HepG2 (cell line): ENCODE measurements at regions of chrX and their contacts with region 1.

Region 1: DNA sequence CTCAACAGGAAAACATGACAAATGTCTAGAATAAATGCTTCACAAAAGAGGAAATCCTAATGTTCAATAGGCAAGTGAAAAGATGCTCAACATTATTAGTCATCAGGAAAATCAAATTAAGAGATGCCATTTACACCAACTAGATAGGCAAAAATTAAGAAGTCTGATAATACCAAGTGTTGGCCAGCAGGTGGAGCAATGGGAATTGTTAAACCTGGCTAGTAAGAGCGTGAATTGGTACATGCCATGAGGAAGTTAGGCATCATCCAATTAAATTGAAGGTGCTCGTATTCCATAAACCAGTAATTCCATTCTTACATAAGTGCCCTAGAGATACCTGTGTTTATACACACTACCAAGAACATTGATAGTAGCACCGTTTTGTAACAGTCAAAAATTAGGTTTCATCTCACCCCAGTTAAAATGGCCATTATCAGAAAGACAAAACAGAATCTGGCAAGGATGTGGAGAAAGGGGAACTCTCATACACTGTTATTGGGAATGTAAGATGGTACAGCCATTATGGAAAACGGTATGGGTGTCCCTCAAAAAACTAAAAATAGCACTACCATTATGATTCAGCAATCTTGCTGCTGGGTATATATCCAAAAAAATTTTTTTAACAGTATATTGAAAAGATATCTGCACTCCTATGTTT is 14.0 kb upstream of the ZCCHC18 start:
- DNase-seq: peak; percentile 22
- ATAC-seq: 0 out of 3 replicates have a peak, but pooled peaks have one; percentile 31
- H3K4me3 ChIP-seq: no peak overlapping the region
- H3K27ac ChIP-seq: no peak overlapping the region
- H3K4me1 ChIP-seq: no peaks in the 10 kb centered on the region
- H3K27me3 ChIP-seq: no peaks in the 10 kb centered on the region
- CTCF ChIP-seq: peak; percentile 59
- EP300 ChIP-seq: no peak
- POLR2A ChIP-seq: no peak
- RAD21 ChIP-seq: no peak

Region 2: GRCh38 chrX:103999234-103999633 is 99.0 kb before region 1 on chrX:
- CTCF ChIA-PET with region 1: no interaction called
- POLR2A ChIA-PET with region 1: no interaction called
- in situ Hi-C with region 1: no loop called
- intact Hi-C with region 1: no loop called
- DNase-seq: no peak
- ATAC-seq: no peak
- H3K4me3 ChIP-seq: no peak overlapping the region
- H3K27ac ChIP-seq: no peak overlapping the region
- H3K4me1 ChIP-seq: no peaks in the 10 kb centered on the region
- H3K27me3 ChIP-seq: no peaks in the 10 kb centered on the region
- CTCF ChIP-seq: no peak
- EP300 ChIP-seq: no peak
- POLR2A ChIP-seq: no peak
- RAD21 ChIP-seq: no peak

Region 3: GRCh38 chrX:104084534-104085277 is 13.6 kb before region 1 on chrX:
- CTCF ChIA-PET with region 1: no interaction called
- POLR2A ChIA-PET with region 1: no interaction called
- in situ Hi-C with region 1: no loop called
- intact Hi-C with region 1: no loop called
- DNase-seq: no peak
- ATAC-seq: no peak
- H3K4me3 ChIP-seq: no peak overlapping the region
- H3K27ac ChIP-seq: no peak overlapping the region
- H3K4me1 ChIP-seq: no peaks in the 10 kb centered on the region
- H3K27me3 ChIP-seq: no peaks in the 10 kb centered on the region
- CTCF ChIP-seq: no peak
- EP300 ChIP-seq: no peak
- POLR2A ChIP-seq: no peak
- RAD21 ChIP-seq: no peak

Region 4: DNA sequence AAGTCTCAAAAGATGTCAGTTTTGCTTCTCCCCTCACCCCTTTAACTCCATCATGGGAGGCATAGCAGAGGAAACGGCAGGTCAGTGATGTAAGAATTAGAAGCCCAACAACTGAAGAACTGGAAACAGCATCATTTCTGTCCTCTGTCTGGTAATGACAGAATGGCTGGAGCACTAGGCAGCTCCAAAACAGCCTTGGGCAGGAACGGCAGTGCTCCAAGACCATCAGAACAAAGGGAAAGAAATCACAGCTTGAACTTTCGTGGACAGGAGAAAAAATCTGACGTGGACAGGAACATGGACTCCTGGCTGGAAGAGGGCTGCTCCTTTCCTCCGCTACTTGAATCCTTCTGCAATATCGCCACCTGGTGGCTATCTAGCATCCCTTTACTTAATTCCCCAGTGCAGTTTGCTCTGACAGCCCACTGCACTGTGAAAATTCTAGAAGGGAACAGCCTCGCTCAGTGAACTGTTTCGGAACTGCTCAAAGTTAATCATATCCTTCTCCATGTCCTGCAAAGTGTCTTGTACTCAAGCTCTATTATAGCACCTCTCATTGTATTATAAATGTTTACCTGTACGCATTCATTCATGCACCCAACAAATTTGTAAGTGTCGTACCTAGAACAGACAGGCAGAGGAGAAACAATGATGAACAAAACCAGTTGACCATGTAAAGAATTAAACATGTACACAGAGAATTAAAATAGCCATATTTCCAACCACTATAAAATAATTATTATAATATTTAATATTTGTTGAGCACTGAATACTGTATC is 38.1 kb after region 1 on chrX:
- CTCF ChIA-PET with region 1: interaction called, 4 read pairs
- POLR2A ChIA-PET with region 1: no interaction called
- in situ Hi-C with region 1: no loop called
- intact Hi-C with region 1: loop called (anchors 1 kb)
- DNase-seq: peak; percentile 70
- ATAC-seq: peak; percentile 93
- H3K4me3 ChIP-seq: peak overlapping the region; percentile 26 to 57 (median 41); a peak in 5 of 6 replicates
- H3K27ac ChIP-seq: no peak overlapping the region
- H3K4me1 ChIP-seq: no peaks in the 10 kb centered on the region
- H3K27me3 ChIP-seq: no peaks in the 10 kb centered on the region
- CTCF ChIP-seq: peak; percentile 74
- EP300 ChIP-seq: no peak
- POLR2A ChIP-seq: no peak
- RAD21 ChIP-seq: 0 out of 2 replicates have a peak, but pooled peaks have one; percentile 26